ENCODE measurements at regions of chr10 and their contacts with region 1.

Region 1: DNA sequence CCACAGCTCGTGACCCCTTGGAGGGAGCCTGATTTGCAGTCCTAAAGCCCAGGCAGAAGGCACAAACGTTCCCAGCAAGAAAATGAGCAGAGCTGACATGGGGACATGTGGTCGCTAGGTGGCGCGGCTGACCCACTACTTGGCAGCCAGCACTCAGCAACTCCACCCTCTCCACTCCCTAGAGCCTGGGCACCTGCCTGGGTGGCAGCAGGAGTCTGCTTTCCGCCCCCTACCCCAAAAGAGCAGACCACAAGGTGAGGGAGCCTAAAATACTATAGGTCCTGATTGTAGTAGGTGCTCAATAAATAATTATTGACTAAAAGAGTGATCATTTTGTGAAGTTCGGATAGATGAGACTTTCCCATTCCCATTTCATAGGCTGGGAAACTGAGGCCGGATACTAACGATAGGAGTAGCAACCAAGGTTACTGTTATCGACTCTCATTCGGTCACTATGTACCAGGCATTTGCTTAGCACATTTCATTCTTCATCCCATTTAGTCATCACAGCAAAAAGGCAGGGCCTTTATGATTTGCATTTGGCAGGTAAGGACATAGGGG is 57.4 kb downstream of the NEUROG3 start:
- DNase-seq: peak; percentile 52 to 89 (median 75)
- ATAC-seq: peak; percentile 83 to 95 (median 94)
- H3K4me3 ChIP-seq: no peak overlapping the region
- H3K4me3 Mint-ChIP-seq: no peak overlapping the region
- H3K27ac ChIP-seq: no peak overlapping the region
- H3K27ac Mint-ChIP-seq: no peak overlapping the region
- H3K4me1 ChIP-seq: no peaks in the 10 kb centered on the region
- H3K4me1 Mint-ChIP-seq: peaks cover 0 to 6% (median 0%) of the 10 kb centered on the region in 3 donors
- H3K27me3 ChIP-seq: peaks cover 2 to 24% of the 10 kb centered on the region in 2 experiments
- H3K27me3 Mint-ChIP-seq: peaks cover 14 to 17% of the 10 kb centered on the region in 2 donors

Region 2: DNA sequence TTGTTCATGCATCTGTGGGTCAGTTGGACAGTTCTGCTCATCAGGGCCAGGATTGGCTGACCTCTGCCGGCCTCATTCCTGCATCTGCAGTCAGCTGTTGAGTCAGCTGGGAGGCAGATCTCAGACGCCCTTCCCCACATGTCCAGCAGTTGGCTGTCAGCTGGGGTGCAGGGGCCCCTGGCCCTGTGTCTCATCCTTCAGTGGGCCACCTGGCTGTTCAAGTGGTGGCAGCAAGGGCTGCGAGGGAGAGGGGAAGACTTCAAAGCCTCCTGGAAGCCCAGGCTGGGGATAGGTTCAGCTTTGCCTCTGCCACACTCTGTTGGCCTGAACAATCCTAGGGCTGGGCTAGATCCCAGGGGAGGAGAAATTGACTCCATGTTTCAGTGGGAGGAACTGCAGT is 132.2 kb before region 1 on chr10:
- CTCF ChIA-PET with region 1: no interaction called
- POLR2A ChIA-PET with region 1: no interaction called
- DNase-seq: no peak
- ATAC-seq: no peak
- H3K4me3 ChIP-seq: no peak overlapping the region
- H3K4me3 Mint-ChIP-seq: no peak overlapping the region
- H3K27ac ChIP-seq: no peak overlapping the region
- H3K27ac Mint-ChIP-seq: peak overlapping the region in 1 of 2 donors; percentile 61
- H3K4me1 ChIP-seq: no peaks in the 10 kb centered on the region
- H3K4me1 Mint-ChIP-seq: no peaks in the 10 kb centered on the region
- H3K27me3 ChIP-seq: no peaks in the 10 kb centered on the region
- H3K27me3 Mint-ChIP-seq: no peaks in the 10 kb centered on the region

Region 3: DNA sequence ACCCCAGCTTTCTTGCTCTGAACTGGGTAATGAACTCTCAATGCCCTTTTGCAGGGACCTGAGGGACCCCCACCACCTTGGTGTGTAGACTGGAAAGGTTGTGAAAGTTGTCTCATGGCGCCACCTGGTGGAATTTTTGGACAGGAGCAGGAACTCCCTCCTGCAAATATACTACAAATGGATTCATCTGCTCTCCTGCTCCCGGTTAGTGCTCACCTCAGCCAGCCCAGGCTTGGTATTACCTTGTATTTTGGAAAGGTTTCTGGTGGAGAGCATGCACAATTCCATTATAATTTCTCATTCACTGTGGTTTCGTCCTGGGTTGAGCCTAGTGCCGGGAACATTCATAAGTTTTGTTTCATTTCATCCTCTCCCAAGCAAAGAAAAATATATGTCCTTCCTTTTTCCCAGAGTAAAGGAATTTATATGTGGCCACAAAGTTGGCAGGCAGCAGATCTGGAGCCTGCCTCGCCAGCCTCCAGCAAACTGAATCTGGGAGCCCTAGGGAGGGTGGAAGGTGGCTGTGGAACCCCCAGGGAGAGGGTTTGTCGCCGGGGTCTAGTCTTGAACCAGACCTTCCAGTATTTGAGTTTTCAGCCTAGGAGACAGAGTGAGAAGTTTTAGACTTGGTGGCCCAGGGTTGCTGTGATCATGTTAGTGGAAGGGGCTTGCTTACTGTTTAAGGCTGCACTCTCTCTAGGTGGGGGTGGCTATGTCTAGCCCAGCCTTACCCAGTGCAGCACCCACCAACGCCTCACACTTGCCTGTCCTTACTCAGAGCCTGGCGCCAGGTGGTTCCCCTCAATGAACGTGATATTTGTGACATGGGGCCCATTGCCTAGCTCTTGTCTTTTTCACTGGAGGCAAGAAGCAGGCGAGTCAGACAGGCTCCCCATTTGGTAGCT is 123.8 kb after region 1 on chr10:
- CTCF ChIA-PET with region 1: interaction called, 54 to 55 read pairs
- POLR2A ChIA-PET with region 1: no interaction called
- DNase-seq: peak; percentile 32 to 88 (median 63)
- ATAC-seq: peak in 3 of 4 experiments; percentile 75 to 83 (median 77)
- H3K4me3 ChIP-seq: no peak overlapping the region
- H3K4me3 Mint-ChIP-seq: no peak overlapping the region
- H3K27ac ChIP-seq: no peak overlapping the region
- H3K27ac Mint-ChIP-seq: no peak overlapping the region
- H3K4me1 ChIP-seq: no peaks in the 10 kb centered on the region
- H3K4me1 Mint-ChIP-seq: peaks cover 0 to 5% (median 0%) of the 10 kb centered on the region in 3 donors
- H3K27me3 ChIP-seq: peaks cover 0 to 20% of the 10 kb centered on the region in 2 experiments
- H3K27me3 Mint-ChIP-seq: peaks cover 4 to 10% of the 10 kb centered on the region in 2 donors